Adrenal gland (tissue), 19 donors: ENCODE measurements at regions of chr15 and their contacts with region 1.

Region 1: GRCh38 chr15:98779463-98780071 is 131.2 kb downstream of the IGF1R start:
- DNase-seq: peak; percentile 81 to 94 (median 90)
- H3K4me3 ChIP-seq: no peak overlapping the region
- H3K27ac ChIP-seq: peak overlapping the region; percentile 59 to 89 (median 80)
- H3K4me1 ChIP-seq: peaks cover 30 to 52% of the 10 kb centered on the region in 2 donors
- H3K27me3 ChIP-seq: no peaks in the 10 kb centered on the region
- CTCF ChIP-seq: peak; percentile 86 to 96 (median 92)
- POLR2A ChIP-seq: peak in 1 of 2 donors; percentile 9

Region 2: GRCh38 chr15:98658831-98659699 is 120.5 kb before region 1 on chr15:
- intact Hi-C with region 1: loop called (anchors 10 kb)
- DNase-seq: peak in 4 of 7 donors; percentile 48 to 67 (median 60)
- H3K4me3 ChIP-seq: no peak overlapping the region
- H3K27ac ChIP-seq: no peak overlapping the region
- H3K4me1 ChIP-seq: peaks cover 22 to 47% of the 10 kb centered on the region in 2 donors
- H3K27me3 ChIP-seq: no peaks in the 10 kb centered on the region
- CTCF ChIP-seq: peak; percentile 70 to 85 (median 80)
- POLR2A ChIP-seq: no peak

Region 3: DNA sequence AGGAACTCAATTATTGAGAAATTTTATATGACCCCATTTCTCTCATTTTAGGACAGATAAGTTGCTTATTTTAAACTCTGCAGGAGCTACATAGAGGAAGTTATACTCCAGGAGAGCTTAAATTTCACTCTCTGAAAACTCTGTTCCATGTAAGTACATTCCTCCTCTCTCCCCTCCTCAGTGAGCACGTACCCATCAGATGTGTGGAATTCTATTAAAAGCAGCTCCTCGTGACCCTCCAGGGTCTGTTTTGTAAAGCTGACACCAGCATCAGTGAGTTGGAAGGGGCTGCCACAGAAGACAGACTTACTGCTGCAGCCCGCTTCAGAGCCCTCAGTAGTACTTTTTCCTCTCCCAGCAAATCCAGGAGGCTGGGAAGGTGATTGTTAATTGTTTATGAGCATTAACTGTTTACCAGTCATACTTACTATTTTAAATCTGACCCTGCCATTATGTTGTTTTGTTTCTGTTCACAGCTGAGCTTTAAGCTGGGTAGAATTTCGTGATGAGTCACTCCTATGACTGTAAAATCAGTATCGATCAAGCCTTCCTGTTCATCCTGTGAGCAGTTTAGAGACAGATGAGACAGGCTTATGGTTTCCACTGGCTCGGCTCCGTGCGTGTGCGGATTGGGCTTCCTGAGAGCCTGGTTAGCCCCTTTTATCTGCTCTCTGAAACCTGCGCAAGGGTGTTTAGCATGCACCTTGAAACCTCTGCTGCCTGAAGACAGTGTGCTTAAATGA is 110.8 kb before region 1 on chr15:
- intact Hi-C with region 1: loop called in 1 of 2 experiments (anchors 10 kb)
- DNase-seq: peak in 4 of 7 donors; percentile 10 to 51 (median 41)
- H3K4me3 ChIP-seq: peak overlapping the region in 1 of 4 donors; percentile 12
- H3K27ac ChIP-seq: peak overlapping the region; percentile 57 to 88 (median 78)
- H3K4me1 ChIP-seq: peaks cover 46 to 91% of the 10 kb centered on the region in 2 donors
- H3K27me3 ChIP-seq: no peaks in the 10 kb centered on the region
- CTCF ChIP-seq: no peak
- POLR2A ChIP-seq: peak in 1 of 2 donors; percentile 61

Region 4: GRCh38 chr15:99062226-99062625 is 282.7 kb after region 1 on chr15:
- intact Hi-C with region 1: loop called in 1 of 2 experiments (anchors 5 kb)
- DNase-seq: no peak
- H3K4me3 ChIP-seq: no peak overlapping the region
- H3K27ac ChIP-seq: no peak overlapping the region
- H3K4me1 ChIP-seq: peaks cover 5 to 7% of the 10 kb centered on the region in 2 donors
- H3K27me3 ChIP-seq: no peaks in the 10 kb centered on the region
- CTCF ChIP-seq: no peak
- POLR2A ChIP-seq: no peak